AG04449 (cell line): ENCODE measurements at regions of chr18 and their contacts with region 1.

Region 1: DNA sequence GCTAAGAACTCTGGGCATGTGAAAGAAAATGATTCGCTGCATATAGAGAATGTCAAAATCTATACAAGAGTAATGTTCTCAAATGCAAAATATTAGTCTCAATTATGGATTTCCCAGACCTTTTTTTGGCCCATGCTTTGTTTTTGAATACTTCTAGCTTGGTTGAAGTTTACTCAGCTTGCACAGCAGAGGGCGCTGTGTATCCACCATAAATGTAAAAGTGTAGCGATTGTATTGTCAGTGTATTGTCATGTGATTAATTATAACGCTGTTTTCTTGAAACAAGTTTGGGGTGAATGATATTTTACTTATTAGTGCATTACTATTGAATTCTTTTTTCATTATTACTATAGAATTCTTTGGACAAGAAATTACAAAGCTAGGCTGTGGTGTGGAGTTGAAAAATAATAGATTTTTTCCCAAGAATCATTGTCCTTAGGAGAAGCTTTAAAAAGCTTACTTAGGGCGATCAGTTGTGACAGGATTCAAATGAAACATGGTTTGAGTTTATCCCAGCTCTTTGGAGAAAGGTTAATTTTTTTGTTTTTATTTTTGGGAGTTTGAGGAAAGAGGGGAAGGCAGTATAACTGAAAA is 98.3 kb downstream of the PIK3C3 start:
- DNase-seq: no peak
- H3K4me3 ChIP-seq: no peak overlapping the region
- CTCF ChIP-seq: peak; percentile 66

Region 2: GRCh38 chr18:41809652-41810051 is 243.6 kb before region 1 on chr18:
- CTCF ChIA-PET with region 1: no interaction called
- POLR2A ChIA-PET with region 1: no interaction called
- DNase-seq: no peak
- H3K4me3 ChIP-seq: no peak overlapping the region
- CTCF ChIP-seq: no peak

Region 3: GRCh38 chr18:42011053-42011452 is 42.2 kb before region 1 on chr18:
- CTCF ChIA-PET with region 1: interaction called, 13 read pairs
- POLR2A ChIA-PET with region 1: no interaction called
- DNase-seq: no peak
- H3K4me3 ChIP-seq: no peak overlapping the region
- CTCF ChIP-seq: no peak

Region 4: DNA sequence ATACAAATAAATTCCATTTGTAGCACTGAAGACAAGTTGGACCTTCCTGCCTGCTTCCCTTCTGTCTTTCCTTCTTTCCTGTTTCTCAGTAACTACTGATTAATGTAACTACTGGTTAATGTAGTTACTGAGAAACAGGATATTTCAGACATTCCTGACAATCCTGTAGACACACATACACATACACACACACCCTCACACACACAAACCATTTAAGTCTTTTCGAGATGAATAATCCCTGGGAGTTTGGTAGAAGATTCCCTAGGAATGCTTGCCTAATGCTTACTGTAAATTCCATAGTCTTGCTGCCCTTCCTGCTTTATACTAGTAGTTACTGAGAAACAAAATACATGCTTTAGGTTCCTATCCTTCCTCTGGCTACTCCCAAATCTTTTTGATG is 14.3 kb before region 1 on chr18:
- CTCF ChIA-PET with region 1: interaction called, 106 read pairs
- POLR2A ChIA-PET with region 1: interaction called, 3 read pairs
- DNase-seq: peak; percentile 98
- H3K4me3 ChIP-seq: no peak overlapping the region
- CTCF ChIP-seq: no peak

Region 5: DNA sequence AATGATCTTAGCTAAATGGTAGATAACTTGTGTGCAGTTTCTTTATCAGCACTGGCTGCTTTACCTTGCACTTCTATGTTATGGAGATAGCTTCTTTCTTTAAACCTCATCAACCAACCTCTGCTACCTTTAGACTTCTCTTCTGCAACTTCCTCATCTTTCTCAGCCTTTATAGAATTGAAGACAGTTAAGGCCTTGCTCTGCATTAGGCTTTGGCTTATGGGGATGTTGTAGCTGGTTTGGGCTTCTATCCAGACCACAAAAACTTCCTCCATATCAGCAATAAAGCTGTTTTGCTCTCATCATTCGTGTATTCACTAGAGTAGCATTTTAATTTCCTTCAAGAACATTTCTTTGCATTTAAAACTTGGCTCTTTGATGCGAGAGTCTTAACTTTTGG is 25.4 kb after region 1 on chr18:
- CTCF ChIA-PET with region 1: interaction called, 143 read pairs
- POLR2A ChIA-PET with region 1: no interaction called
- DNase-seq: no peak
- H3K4me3 ChIP-seq: no peak overlapping the region
- CTCF ChIP-seq: no peak

Region 6: GRCh38 chr18:42114310-42114943 is 61.1 kb after region 1 on chr18:
- CTCF ChIA-PET with region 1: interaction called, 53 read pairs
- POLR2A ChIA-PET with region 1: no interaction called
- DNase-seq: peak; percentile 24
- H3K4me3 ChIP-seq: no peak overlapping the region
- CTCF ChIP-seq: peak; percentile 68

Region 7: DNA sequence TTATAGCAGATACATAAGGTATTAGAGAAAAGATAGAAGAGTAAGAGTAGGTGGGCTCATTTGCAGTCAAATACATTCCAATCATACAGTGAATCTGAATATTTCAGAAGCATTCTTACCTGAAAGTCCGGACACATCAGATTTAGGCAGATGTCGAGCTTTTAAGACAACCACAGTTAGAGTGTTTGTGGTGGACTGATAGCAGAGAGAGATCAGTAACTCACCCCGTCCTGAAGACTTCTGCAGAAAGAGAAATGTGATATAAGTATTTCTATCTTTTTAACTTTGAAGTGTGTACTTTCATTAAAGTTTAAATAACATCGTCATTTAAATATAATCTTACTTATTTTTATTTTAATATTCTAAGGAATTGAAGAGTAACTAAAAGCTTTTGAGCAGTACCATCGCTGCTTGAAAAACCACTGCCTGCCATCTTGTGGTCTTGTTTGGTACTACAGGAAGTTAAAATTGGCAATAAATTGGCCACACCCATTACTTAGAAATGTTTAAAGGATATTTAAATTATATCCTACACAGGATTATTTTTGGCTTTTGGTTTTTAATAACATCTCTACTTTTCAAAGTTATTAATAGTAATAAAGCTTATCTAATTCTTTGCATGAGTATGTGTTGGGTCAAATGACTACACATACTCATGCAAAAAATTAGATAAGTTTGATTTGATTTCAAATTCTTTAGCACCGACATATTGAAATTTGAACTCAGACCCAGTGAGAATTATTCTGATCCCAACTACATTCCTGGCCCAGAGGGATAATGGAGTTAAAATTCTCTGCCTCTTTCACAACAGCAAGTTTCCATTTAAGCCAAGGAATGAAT is 1218.5 kb after region 1 on chr18:
- CTCF ChIA-PET with region 1: interaction called, 40 read pairs
- POLR2A ChIA-PET with region 1: no interaction called
- DNase-seq: peak; percentile 7
- H3K4me3 ChIP-seq: no peak overlapping the region
- CTCF ChIP-seq: peak; percentile 59